Activated CD4-positive, alpha-beta memory T cell treated with anti-CD3 and anti-CD28 coated beads for 36 hours (primary cell): ENCODE measurements at regions of chr2 and their contacts with region 1.

Region 1: DNA sequence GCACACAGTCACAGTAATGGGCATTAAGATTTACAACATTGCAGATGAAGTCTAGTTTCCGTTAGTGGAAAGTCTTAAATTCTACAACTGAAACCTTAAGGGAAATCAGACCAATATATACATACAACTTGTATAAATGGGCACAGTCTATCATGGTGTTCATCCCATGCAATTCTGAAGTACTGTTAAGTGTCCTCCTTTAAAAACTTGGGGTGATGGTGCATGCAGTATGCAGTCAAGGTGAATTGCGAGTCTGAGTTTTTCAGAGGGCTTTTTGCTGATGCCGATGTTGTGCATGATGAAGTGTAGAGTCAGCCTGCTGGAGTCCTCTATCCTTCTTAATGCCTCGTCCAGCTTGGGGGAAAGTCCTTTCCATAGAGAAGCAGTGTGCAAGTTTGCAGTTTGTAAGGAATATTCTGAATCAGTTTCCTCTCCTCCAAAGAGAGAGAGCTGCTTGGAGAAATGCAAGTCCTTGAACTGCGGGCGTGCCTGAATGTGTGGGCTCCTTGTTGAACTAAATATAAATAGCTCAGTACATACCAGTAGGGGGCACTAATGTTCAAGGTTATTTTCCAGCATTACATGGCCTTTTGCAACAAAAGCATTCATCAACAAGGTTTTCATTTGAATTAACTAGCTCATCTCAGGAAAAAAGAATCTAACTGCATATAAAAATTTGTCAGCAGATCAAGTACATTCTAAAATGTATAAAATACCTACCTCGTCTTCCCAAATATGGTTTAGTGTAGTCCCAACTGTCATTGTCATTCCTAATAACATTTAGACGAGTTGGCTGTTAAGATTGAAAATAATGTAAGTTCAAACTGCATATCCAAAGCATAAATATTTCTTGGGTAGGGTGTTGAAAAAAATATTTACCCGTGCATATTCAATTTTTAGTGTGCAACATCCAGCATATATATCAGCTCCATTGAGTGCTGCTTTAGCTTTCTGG is 21.3 kb downstream of the HNRNPLL start:
- DNase-seq: peak; percentile 43
- H3K4me3 Mint-ChIP-seq: no peak overlapping the region
- H3K27ac Mint-ChIP-seq: peak overlapping the region; percentile 52
- H3K4me1 Mint-ChIP-seq: peaks cover 60% of the 10 kb centered on the region
- H3K27me3 Mint-ChIP-seq: no peaks in the 10 kb centered on the region

Region 2: DNA sequence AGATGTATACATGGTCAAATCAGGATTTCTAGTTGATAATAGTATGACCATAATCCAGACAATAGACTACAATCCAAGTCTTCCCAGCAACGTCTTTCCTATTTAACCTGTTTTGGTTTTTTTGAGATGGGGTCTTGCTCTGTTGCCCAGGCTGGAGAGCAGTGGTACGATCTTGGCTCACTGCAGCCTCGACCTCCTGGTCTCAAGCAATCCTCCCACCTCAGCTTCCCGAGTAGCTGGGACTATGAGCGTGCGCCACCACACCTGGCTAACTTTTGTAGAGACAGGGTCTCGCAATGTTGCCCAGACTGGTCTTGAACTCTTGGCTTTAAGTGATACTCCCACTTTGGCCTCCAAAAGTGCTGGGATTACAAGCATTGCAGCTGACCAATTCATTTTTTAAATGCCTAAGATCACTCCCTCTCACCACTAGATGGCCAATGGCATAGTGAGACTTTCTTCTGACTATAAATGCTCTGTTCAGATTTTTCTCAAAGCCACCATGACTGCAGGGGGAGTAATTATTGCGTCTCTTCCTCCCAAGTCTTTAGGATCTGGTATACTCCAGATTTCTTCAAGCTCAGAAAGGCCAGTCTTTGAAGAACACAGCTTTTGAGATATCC is 26.4 kb before region 1 on chr2:
- CTCF ChIA-PET with region 1: interaction called, 12 read pairs
- POLR2A ChIA-PET with region 1: no interaction called
- intact Hi-C with region 1: no loop called
- DNase-seq: no peak
- H3K4me3 Mint-ChIP-seq: no peak overlapping the region
- H3K27ac Mint-ChIP-seq: no peak overlapping the region
- H3K4me1 Mint-ChIP-seq: peaks cover 15% of the 10 kb centered on the region
- H3K27me3 Mint-ChIP-seq: no peaks in the 10 kb centered on the region

Region 3: DNA sequence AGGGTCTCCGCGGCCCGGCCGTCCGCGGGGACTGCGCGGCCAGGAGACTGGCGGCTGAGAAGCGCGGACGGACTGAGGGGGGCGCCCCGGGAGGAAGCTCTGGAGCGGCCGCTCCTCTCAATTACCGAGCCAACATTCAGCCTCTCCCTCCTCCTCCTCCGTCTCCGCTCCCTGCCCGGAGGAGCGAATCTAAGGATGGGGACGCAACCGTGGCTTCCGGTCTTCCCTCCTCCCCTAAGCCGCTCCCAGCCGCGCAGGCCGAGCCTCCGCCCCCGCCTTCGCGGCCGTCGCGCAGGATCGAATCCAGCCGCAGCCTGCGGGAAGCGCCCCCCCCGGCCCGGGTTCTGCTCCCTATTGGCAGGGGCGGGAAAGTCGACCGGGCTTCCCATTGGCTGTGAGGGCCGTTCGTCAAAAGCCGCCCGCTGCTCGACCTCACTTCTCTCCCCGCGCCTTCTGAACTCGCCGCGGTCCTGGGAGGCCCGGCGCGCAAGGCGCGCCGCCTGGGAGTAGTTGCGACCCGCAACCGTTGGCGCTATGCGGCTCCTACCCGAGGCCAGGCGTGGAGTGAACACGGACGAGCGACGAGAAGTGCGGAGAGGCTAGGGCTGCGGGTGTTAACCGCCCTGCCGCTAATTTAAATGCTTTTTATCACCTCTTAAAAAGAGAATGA is 21.4 kb after region 1 on chr2 and contains the start of gene HNRNPLL:
- CTCF ChIA-PET with region 1: interaction called, 110 read pairs
- POLR2A ChIA-PET with region 1: interaction called, 24 read pairs
- intact Hi-C with region 1: loop called (anchors 1 kb)
- DNase-seq: peak; percentile 98
- H3K4me3 Mint-ChIP-seq: peak within 1 kb of the TSS; percentile 92
- H3K27ac Mint-ChIP-seq: peak within 1 kb of the TSS; percentile 93
- H3K4me1 Mint-ChIP-seq: peaks cover 39% of the 10 kb centered on the region
- H3K27me3 Mint-ChIP-seq: no peaks in the 10 kb centered on the region
- total RNA-seq, gene HNRNPLL: 106 to 108 TPM

Region 4: GRCh38 chr2:38619458-38620164 is 38.1 kb after region 1 on chr2:
- CTCF ChIA-PET with region 1: no interaction called
- POLR2A ChIA-PET with region 1: no interaction called
- intact Hi-C with region 1: no loop called
- DNase-seq: no peak
- H3K4me3 Mint-ChIP-seq: no peak overlapping the region
- H3K27ac Mint-ChIP-seq: no peak overlapping the region
- H3K4me1 Mint-ChIP-seq: peaks cover 26% of the 10 kb centered on the region
- H3K27me3 Mint-ChIP-seq: no peaks in the 10 kb centered on the region

Region 5: DNA sequence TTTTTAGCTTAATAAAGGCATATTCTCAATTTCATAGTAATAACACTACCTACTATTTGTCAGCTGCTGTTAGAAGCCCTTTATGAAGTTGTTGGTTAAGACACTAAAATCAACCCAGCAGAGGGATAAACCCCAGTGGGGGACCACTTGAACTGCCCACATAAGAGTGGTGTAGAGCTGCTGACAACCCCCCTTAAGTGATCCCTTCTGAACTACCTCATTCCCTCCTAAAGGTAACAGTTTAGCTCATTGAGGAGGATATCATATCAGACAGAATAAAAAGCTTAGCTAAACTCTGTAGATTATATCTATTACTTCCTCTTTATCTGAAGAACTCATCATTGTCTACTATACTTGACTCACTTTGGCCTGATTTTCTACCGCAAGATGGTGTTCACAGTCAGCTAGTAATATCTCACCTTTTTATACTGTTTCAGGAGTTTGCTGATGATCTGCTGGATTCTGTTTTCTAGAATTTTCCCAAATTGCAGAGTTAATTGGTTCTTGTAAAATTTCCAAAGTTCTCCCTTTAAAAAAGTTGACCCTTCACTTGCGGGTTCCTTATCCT is 100.6 kb after region 1 on chr2:
- CTCF ChIA-PET with region 1: interaction called, 23 read pairs
- POLR2A ChIA-PET with region 1: interaction called, 4 read pairs
- intact Hi-C with region 1: no loop called
- DNase-seq: peak; percentile 38
- H3K4me3 Mint-ChIP-seq: peak overlapping the region; percentile 63
- H3K27ac Mint-ChIP-seq: peak overlapping the region; percentile 84
- H3K4me1 Mint-ChIP-seq: peaks cover 78% of the 10 kb centered on the region
- H3K27me3 Mint-ChIP-seq: no peaks in the 10 kb centered on the region

Region 6: DNA sequence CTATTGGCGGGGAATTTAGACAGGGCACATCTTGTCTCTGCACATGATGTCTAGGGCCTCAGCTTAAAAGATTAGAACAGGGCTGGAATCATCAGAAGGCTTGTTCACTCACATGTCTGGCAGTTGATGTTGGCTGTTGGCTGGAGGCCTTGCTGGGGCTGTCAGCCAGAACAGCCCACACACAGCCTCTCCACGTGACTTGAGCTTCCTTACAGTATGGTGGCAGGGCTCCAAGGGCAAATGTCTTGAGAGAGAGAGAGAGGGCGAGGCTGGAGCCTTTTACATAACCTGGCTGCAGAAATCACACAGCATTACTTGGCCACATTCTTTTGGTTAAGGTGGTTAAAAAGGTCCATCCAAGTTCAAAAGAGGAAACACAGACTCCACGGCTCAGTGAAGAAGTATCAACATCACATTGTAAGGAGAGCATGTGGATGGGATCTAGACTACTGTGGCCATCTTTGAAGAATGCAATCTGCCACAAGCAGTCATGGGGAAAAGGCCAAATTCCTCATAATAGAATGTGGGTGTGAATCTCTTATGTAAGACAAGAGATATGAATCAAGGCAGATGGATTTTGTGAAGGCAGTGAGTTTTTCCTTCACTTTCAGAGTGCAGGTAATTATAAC is 139.3 kb after region 1 on chr2:
- CTCF ChIA-PET with region 1: interaction called, 135 read pairs
- POLR2A ChIA-PET with region 1: interaction called, 6 read pairs
- intact Hi-C with region 1: loop called (anchors 1 kb)
- DNase-seq: peak; percentile 47
- H3K4me3 Mint-ChIP-seq: peak overlapping the region; percentile 25
- H3K27ac Mint-ChIP-seq: peak overlapping the region; percentile 84
- H3K4me1 Mint-ChIP-seq: peaks cover 72% of the 10 kb centered on the region
- H3K27me3 Mint-ChIP-seq: no peaks in the 10 kb centered on the region

Region 7: DNA sequence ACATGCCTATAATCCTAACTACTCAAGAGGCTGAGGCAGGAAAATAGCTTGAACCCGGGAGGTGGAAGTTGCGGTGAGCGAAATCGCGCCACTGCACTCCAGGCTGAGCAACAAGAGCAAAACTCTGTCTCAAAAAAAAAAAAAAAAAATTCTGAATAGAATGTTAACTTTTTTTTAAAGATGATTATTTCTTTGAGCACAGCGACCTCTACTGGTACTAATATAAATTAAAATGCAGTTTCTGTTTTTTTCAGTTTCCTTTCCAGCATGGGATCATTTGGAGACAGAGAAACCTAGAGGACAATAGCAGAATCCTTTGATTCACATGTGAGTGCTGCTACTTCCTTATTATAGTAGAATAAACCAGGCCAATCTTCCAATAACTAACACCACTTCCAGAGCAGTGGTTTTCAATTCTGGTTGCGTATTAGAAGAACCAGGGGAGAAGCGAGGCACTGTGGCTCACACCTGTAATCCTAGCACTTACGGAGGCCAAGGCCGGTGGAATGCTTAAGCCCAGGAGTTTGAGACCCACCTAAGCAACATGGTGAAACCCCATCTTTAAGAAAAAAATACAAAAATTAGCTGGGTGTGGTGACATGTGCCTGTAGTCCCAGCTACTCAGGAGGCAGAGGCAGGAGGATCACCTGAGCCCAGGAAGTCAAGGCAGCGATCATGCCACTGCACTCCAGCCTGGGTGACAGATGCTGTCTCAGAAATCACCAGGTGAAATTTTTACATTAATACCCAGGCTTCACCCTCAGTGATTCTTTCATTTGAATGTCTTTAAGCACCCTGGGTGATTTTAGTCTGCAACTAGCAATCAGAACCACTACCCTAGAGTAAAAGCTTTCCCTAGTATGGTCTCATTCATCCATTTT is 159.6 kb after region 1 on chr2:
- CTCF ChIA-PET with region 1: interaction called, 32 read pairs
- POLR2A ChIA-PET with region 1: interaction called, 38 read pairs
- intact Hi-C with region 1: loop called (anchors 1 kb)
- DNase-seq: peak; percentile 51
- H3K4me3 Mint-ChIP-seq: no peak overlapping the region
- H3K27ac Mint-ChIP-seq: peak overlapping the region; percentile 61
- H3K4me1 Mint-ChIP-seq: peaks cover 66% of the 10 kb centered on the region
- H3K27me3 Mint-ChIP-seq: no peaks in the 10 kb centered on the region